Endothelial cell of umbilical vein (primary cell): ENCODE measurements at regions of chr18 and their contacts with region 1.

Region 1: GRCh38 chr18:2662990-2663389 is 7.5 kb downstream of the SMCHD1 start:
- DNase-seq: no peak
- H3K4me3 ChIP-seq: no peak overlapping the region
- H3K27ac ChIP-seq: no peak overlapping the region
- H3K4me1 ChIP-seq: peaks cover 14% of the 10 kb centered on the region
- H3K27me3 ChIP-seq: no peaks in the 10 kb centered on the region
- CTCF ChIP-seq: no peak
- POLR2A ChIP-seq: no peak

Region 2: DNA sequence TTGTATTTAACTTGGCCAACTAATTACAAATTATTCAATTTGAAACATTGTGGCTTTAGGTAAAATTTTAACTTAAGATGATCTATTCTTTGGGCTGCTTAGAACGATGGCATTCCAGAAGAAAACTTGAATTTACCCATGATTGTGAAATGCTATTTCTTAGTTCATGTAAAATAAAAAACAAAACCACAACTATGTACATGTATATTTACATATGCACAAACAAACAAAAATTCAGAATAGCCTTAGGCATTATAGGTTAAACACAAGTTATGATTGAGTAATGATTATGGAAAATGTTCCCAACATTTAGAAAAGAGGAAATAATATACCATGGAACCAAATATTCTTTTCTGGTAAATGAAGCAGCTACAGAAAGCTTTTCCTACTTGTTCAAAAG is 11.0 kb before region 1 on chr18:
- CTCF ChIA-PET with region 1: no interaction called
- POLR2A ChIA-PET with region 1: no interaction called
- dilution Hi-C with region 1: no loop called
- intact Hi-C with region 1: no loop called
- DNase-seq: no peak
- H3K4me3 ChIP-seq: no peak overlapping the region
- H3K27ac ChIP-seq: no peak overlapping the region
- H3K4me1 ChIP-seq: peaks cover 8% of the 10 kb centered on the region
- H3K27me3 ChIP-seq: peaks cover 0 to 4% of the 10 kb centered on the region in 2 experiments
- CTCF ChIP-seq: no peak
- POLR2A ChIP-seq: no peak

Region 3: DNA sequence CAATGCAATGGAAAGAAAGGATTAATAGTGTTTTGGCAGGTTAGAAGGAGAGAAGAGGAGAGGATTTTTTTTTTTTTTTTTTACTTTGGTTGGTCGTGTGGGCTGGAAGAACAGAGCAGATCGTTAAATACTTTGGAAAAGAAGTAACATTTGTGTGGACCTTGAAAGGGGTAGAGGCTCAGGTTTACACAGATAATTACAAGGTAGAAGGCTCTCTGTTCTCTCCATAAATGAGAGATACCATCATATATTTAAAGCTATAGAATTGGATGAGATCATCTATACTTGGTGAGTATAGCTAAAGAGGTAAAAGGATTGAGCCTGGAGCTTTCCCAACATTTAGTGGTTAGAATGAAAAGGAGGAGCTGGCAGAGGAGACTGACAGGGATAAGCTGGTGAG is 41.6 kb after region 1 on chr18:
- CTCF ChIA-PET with region 1: interaction called, 3 read pairs
- POLR2A ChIA-PET with region 1: no interaction called
- dilution Hi-C with region 1: no loop called
- intact Hi-C with region 1: loop called (anchors 5 kb)
- DNase-seq: no peak
- H3K4me3 ChIP-seq: no peak overlapping the region
- H3K27ac ChIP-seq: no peak overlapping the region
- H3K4me1 ChIP-seq: no peaks in the 10 kb centered on the region
- H3K27me3 ChIP-seq: no peaks in the 10 kb centered on the region
- CTCF ChIP-seq: no peak
- POLR2A ChIP-seq: no peak